WTC11 (cell line): ENCODE measurements at regions of chr11 and their contacts with region 1.

Region 1: GRCh38 chr11:69918938-69919650 is 99.9 kb upstream of the FGF3 start:
- DNase-seq: peak; percentile 93
- ATAC-seq: peak; percentile 70
- H3K4me3 Mint-ChIP-seq: no peak overlapping the region
- H3K27ac Mint-ChIP-seq: no peak overlapping the region
- H3K4me1 Mint-ChIP-seq: 0 out of 2 replicates have a peak, but pooled peaks cover 3% of the 10 kb centered on the region
- H3K27me3 Mint-ChIP-seq: peaks cover 32% of the 10 kb centered on the region
- CTCF ChIP-seq: peak; percentile 87

Region 2: DNA sequence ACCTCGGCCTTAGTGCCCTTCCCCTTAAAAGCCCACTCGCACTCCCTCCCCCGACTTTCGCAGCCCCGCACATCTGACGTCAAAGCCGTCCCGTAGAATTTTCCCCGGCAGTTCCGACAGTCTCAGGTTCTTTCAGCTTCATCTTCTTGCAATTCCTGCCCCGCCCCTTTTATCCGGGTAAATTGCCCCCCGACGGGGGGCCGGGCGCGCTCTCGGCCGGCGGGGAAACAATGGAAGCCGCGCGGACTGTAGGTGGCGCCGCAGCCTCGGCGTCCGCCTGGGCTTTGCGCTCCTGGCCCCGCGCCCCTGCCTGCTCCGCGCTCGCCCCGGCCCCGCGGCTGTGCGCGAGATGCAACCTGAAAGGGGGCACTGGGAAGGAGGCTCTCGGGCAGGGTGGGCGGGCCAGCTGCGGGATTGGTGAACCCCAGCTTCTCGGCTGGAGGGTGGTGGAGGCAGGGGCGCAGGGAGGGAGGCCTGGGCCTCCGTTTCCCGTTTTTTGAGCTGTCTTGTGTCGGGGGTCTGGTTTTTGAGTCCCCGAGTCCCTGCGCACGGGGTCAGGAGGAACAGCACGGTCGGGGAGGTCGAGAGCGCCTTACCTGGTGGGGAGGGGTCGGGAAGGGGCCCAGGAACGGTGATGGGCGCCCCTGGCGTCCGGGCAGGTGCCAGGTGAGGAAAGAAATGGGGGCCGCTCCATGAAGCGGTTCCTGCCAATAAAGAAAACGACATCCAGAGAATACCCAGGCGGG is 214.4 kb before region 1 on chr11:
- CTCF ChIA-PET with region 1: interaction called, 11 read pairs
- POLR2A ChIA-PET with region 1: no interaction called
- DNase-seq: peak; percentile 94
- ATAC-seq: peak; percentile 38
- H3K4me3 Mint-ChIP-seq: peak overlapping the region; percentile 86
- H3K27ac Mint-ChIP-seq: peak overlapping the region; percentile 96
- H3K4me1 Mint-ChIP-seq: peaks cover 52% of the 10 kb centered on the region
- H3K27me3 Mint-ChIP-seq: peaks cover 7% of the 10 kb centered on the region
- CTCF ChIP-seq: no peak

Region 3: DNA sequence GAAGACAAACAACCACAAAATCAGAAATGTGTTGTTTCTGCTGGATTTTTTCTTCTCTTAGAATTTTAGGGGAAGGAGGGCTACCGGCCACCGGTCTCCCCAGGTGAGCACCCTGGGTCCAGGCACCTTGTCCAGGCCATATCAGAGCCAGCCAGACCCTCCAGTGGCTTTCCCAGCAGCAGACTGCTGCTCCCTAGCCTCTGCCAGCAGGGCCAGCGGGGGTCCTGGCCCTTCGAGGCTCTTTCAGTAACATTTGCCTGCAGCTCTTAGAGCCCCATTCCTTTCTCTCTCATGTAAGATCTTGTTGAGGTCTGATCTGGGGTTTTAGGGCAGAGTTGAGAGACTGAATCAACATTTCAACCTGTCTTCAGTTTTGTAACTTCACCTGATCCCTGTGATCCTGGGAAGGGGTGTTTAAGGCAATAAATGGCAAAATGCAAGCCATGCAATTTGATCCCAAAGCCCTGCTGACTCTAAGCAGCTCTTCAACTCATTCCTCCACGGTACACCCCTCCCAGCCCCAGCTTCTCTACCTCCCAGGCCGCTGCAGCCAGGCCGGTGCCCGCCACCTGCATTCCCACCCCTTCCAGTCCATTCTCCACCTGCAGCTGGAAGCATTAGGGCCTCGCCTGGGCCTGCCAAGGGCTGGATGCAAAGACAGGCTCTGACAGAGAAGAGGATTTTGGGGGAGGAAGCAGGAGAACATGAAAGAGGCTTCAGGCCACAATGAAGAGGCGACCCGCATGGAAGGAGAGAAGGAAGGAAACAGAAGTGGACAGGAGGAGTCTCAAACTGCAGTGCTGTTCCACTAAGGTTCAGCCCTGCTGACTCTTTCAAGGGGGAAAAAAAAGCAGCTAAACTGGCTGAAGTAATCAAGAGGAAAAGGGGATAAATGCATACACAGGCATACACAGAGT is 13.2 kb after region 1 on chr11:
- CTCF ChIA-PET with region 1: interaction called, 36 read pairs
- POLR2A ChIA-PET with region 1: no interaction called
- DNase-seq: peak; percentile 39
- ATAC-seq: peak; percentile 46
- H3K4me3 Mint-ChIP-seq: no peak overlapping the region
- H3K27ac Mint-ChIP-seq: no peak overlapping the region; the same call in 1 of the 2 replicates
- H3K4me1 Mint-ChIP-seq: peaks cover 24% of the 10 kb centered on the region
- H3K27me3 Mint-ChIP-seq: peaks cover 26% of the 10 kb centered on the region
- CTCF ChIP-seq: no peak

Region 4: GRCh38 chr11:69950120-69950519 is 31.0 kb after region 1 on chr11:
- CTCF ChIA-PET with region 1: interaction called, 24 read pairs
- POLR2A ChIA-PET with region 1: no interaction called
- DNase-seq: peak; percentile 89
- ATAC-seq: peak; percentile 78
- H3K4me3 Mint-ChIP-seq: no peak overlapping the region
- H3K27ac Mint-ChIP-seq: no peak overlapping the region
- H3K4me1 Mint-ChIP-seq: peaks cover 16% of the 10 kb centered on the region
- H3K27me3 Mint-ChIP-seq: no peaks in the 10 kb centered on the region
- CTCF ChIP-seq: peak; percentile 86

Region 5: DNA sequence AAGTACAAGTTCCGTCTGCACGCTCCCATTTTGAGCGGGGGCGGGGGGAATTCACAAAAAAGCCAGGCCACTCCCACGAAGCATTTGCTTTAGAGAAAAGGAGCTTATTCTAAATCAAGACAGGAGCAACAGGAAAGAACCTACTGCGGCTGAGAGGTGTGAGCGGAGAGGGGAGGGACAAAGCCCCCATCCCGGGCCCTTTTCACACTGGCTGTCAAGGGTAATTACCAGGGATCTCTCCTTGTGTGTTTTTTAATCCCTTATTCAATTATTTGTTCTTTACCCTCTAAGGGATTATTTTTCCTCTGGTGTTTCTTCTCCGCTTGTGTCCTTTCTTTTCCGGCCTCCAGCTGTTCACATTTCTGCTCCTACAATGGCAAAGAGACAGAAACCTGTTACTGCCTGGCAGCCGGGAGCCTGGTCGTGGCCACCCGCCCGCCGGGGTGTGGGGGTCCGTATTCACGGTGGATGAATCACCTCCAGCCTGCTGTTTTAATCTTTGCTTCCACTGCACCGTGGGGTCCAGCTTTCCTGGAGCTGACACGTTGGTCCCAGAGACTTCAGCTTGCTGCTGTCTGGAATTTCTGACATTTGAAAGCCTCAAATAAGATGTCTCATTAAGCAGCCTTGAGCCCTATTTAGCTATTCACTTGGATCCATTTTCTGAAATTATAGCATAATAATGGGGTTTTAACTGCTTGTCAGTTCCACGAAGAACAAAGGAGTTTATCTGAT is 222.6 kb after region 1 on chr11:
- CTCF ChIA-PET with region 1: interaction called, 11 read pairs
- POLR2A ChIA-PET with region 1: no interaction called
- DNase-seq: no peak
- ATAC-seq: peak; percentile 41
- H3K4me3 Mint-ChIP-seq: peak overlapping the region; percentile 57
- H3K27ac Mint-ChIP-seq: no peak overlapping the region
- H3K4me1 Mint-ChIP-seq: peaks cover 38% of the 10 kb centered on the region
- H3K27me3 Mint-ChIP-seq: peaks cover 28% of the 10 kb centered on the region
- CTCF ChIP-seq: no peak

Region 6: DNA sequence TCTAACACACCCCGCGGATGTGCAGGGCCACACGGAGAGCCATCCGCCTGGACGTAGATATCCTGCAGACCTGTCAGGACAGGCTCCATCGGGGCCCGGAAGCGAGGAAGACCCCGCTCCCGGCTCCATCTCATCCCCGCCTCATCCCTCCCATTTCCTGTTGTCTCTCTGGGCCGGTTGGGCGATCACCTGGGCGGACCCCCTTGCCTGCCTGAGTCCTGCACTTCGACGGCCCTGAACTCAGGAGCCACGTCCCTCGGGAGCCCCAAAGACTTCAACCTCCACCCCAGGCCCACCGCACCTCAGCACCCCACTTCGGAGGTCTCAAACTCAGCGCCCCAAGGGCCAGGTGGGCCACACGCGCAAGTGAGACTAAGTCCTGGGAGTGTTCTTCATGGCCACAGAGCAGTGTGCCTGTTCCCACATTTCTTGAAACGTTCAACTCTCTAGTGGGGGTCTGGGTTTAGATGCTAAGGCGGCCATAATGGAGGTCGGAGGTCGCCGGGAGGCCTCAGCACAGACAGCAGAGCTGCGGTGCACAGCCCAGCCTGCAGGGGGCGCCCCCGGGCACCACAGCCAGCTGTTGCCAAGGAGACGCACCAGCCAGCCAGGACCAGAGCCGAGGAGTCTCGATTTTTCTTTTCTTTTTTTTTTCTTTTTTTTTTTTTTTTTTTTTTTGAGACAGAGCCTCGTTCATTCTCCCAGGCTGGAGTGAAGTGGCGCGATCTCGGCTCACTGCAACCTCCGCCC is 258.0 kb after region 1 on chr11:
- CTCF ChIA-PET with region 1: interaction called, 13 read pairs
- POLR2A ChIA-PET with region 1: no interaction called
- DNase-seq: peak; percentile 90
- ATAC-seq: peak; percentile 75
- H3K4me3 Mint-ChIP-seq: no peak overlapping the region
- H3K27ac Mint-ChIP-seq: no peak overlapping the region
- H3K4me1 Mint-ChIP-seq: peaks cover 24% of the 10 kb centered on the region
- H3K27me3 Mint-ChIP-seq: no peaks in the 10 kb centered on the region
- CTCF ChIP-seq: peak; percentile 90

Region 7: DNA sequence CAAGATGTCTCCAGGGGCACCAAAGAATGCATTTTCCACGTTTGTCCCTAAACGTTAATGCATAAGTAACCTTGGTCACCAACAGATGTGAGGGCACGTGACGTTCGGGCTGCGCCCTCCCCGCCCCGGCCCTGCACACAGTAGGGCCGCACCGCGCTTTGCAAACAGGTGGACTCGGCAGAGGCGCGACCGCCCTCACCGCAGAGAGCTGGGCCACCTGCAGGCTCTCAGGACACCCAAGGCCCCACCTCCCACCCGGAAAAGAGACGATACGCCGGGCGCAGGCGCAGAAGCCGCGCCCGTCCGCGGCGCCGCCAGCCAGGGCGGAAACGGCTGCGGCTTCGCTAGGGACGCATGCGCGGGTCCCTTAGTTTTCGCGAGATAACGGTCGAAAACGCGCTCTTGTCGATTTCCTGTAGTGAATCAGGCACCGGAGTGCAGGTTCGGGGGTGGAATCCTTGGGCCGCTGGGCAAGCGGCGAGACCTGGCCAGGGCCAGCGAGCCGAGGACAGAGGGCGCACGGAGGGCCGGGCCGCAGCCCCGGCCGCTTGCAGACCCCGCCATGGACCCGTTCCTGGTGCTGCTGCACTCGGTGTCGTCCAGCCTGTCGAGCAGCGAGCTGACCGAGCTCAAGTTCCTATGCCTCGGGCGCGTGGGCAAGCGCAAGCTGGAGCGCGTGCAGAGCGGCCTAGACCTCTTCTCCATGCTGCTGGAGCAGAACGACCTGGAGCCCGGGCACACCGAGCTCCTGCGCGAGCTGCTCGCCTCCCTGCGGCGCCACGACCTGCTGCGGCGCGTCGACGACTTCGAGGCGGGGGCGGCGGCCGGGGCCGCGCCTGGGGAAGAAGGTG is 284.0 kb after region 1 on chr11 and contains the start of gene FADD:
- CTCF ChIA-PET with region 1: interaction called, 41 read pairs
- POLR2A ChIA-PET with region 1: no interaction called
- DNase-seq: peak; percentile 84
- ATAC-seq: peak; percentile 61
- H3K4me3 Mint-ChIP-seq: peak within 1 kb of the TSS; percentile 88
- H3K27ac Mint-ChIP-seq: peak within 1 kb of the TSS; percentile 92
- H3K4me1 Mint-ChIP-seq: peaks cover 55% of the 10 kb centered on the region
- H3K27me3 Mint-ChIP-seq: 0 out of 2 replicates have a peak, but pooled peaks cover 2% of the 10 kb centered on the region
- CTCF ChIP-seq: no peak
- total RNA-seq, gene FADD: 49.0 to 58.6 TPM (median 53.9 TPM) in 3 replicates